ENCODE measurements at regions of chr6 and their contacts with region 1.

Region 1: GRCh38 chr6:129598244-129599187 is 111.5 kb downstream of the ARHGAP18 start:
- DNase-seq: no peak

Region 2: DNA sequence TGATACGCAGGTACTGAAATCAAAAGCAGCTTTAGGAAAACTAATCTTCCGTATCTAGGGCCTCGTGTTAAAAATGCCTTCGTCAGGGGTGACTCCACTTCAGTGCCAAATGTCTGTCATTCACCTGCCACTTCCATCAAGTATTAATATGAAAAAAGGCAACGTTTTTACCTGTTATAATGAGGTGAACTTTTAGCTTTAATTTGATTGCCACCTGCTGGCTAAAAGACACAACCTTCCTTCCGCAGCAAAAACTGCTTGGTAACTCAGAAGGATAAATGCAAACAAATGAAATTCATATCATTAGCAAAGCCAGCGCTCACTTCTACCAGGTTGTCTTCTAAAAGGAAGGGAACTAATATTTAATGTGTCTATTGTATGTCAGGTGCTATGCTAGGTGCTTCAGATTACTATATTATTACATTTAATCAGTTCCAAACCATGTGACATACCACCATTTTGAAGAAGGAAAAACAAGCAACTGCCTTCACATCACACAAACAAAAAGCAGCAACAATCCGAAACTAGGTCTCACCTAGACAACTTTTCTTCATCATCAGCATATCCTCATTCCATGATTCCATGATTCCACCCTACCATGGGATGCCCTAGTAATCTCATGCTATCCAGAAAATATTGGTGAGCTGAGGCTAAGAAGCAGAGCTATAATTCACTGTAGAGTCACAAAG is 132.1 kb after region 1 on chr6:
- intact Hi-C with region 1: loop called (anchors 2 kb)
- DNase-seq: no peak

Region 3: GRCh38 chr6:129936329-129937165 is 338.0 kb after region 1 on chr6:
- intact Hi-C with region 1: loop called (anchors 5 kb)
- DNase-seq: no peak

Region 4: DNA sequence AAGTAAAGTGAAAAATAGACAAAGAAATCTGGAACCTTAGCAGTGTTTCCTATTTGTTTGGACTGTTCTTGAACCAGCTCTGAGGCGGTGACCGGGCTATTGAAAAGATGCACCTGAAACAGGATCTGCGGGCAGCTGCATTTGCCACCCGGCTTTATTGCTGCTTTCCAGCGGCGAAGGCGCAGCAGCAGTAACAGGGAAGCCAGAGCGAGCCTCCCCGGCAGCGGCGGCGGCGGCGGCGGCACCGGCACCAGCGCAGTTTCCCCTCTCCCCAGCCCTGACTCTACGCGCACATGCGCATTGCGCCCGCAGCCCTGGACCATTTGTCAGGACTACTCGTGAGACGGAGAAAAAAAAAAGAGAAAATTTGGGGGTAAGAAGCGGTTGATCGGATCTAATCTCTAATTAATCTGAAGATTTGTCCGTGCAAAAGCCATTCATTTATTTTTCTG is 419.8 kb after region 1 on chr6 and contains the start of gene L3MBTL3:
- intact Hi-C with region 1: loop called (anchors 5 kb)
- DNase-seq: peak; percentile 93
- total RNA-seq, gene L3MBTL3: 2.8 TPM

Measured in cardiac septum (tissue), 1 donor.